Activated CD4-positive, alpha-beta T cell treated with anti-CD3 and anti-CD28 coated beads for 36 hours (primary cell): ENCODE measurements at regions of chr14 and their contacts with region 1.

Region 1: GRCh38 chr14:102565331-102565887 is 27.0 kb upstream of the RCOR1 start:
- DNase-seq: no peak
- ATAC-seq: peak; percentile 74
- H3K4me3 Mint-ChIP-seq: no peak overlapping the region
- H3K27ac Mint-ChIP-seq: no peak overlapping the region
- H3K4me1 Mint-ChIP-seq: peaks cover 12% of the 10 kb centered on the region
- H3K27me3 Mint-ChIP-seq: no peaks in the 10 kb centered on the region

Region 2: GRCh38 chr14:102608064-102608446 is 42.6 kb after region 1 on chr14:
- CTCF ChIA-PET with region 1: no interaction called
- POLR2A ChIA-PET with region 1: interaction called, 10 read pairs
- intact Hi-C with region 1: no loop called
- DNase-seq: no peak
- ATAC-seq: peak; percentile 73
- H3K4me3 Mint-ChIP-seq: no peak overlapping the region
- H3K27ac Mint-ChIP-seq: no peak overlapping the region
- H3K4me1 Mint-ChIP-seq: peaks cover 40% of the 10 kb centered on the region
- H3K27me3 Mint-ChIP-seq: no peaks in the 10 kb centered on the region